BJ (cell line): ENCODE measurements at regions of chr4 and their contacts with region 1.

Region 1: DNA sequence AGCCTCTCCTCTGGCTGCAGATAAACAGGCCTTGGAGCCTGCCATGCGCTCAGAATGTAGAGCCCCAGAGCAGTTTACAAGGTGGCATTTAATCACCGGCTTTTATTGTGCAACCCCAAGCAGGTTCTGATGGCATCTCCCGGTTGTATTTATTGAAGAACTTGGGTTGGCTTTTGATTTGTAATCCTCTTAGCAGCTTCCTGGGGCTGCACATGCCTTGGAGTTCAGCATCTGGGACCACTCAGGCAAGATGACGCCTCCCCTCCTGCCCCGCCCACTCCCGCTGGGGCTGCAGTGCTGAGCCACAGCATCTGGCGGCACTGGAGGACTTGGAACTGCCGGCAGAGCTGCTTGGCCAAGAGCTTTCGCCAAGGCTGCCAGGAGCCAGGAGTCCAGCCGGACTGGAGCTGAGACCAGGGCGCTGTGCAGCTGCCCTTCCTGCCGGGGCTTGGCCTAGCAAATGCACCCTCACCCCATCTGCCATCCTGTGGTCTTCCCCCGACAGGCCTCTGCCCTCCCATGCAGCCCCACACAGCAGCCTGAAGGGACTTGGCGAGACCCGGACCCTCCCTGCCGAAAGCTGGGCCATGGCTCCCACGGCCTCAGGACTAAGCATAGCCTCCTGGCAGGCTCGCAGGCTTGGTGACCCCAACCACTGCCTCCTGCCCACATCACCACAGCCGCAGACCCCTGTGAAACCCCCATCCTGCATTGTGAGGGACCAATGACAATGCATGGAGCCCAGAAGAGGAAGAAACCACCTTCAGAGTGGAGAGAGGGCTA is 5.4 kb downstream of the HTRA3 start:
- DNase-seq: peak; percentile 77
- H3K4me3 ChIP-seq: no peak overlapping the region
- H3K27me3 ChIP-seq: peaks cover 4% of the 10 kb centered on the region; the same call in 1 of the 2 replicates
- CTCF ChIP-seq: peak; percentile 76

Region 2: GRCh38 chr4:7423801-7424552 is 851.0 kb before region 1 on chr4:
- CTCF ChIA-PET with region 1: no interaction called
- POLR2A ChIA-PET with region 1: no interaction called
- DNase-seq: no peak
- H3K4me3 ChIP-seq: no peak overlapping the region
- H3K27me3 ChIP-seq: 0 out of 2 replicates have a peak, but pooled peaks cover 2% of the 10 kb centered on the region
- CTCF ChIP-seq: no peak

Region 3: GRCh38 chr4:8260656-8261111 is 14.3 kb before region 1 on chr4:
- CTCF ChIA-PET with region 1: interaction called, 11 read pairs
- POLR2A ChIA-PET with region 1: no interaction called
- DNase-seq: peak; percentile 90
- H3K4me3 ChIP-seq: no peak overlapping the region
- H3K27me3 ChIP-seq: no peaks in the 10 kb centered on the region; the same call in 1 of the 2 replicates
- CTCF ChIP-seq: peak; percentile 35

Region 4: GRCh38 chr4:8308856-8309771 is 34.2 kb after region 1 on chr4:
- CTCF ChIA-PET with region 1: no interaction called
- POLR2A ChIA-PET with region 1: no interaction called
- DNase-seq: no peak
- H3K4me3 ChIP-seq: no peak overlapping the region
- H3K27me3 ChIP-seq: 0 out of 2 replicates have a peak, but pooled peaks cover 2% of the 10 kb centered on the region
- CTCF ChIP-seq: no peak; the same call in 1 of the 2 replicates

Region 5: DNA sequence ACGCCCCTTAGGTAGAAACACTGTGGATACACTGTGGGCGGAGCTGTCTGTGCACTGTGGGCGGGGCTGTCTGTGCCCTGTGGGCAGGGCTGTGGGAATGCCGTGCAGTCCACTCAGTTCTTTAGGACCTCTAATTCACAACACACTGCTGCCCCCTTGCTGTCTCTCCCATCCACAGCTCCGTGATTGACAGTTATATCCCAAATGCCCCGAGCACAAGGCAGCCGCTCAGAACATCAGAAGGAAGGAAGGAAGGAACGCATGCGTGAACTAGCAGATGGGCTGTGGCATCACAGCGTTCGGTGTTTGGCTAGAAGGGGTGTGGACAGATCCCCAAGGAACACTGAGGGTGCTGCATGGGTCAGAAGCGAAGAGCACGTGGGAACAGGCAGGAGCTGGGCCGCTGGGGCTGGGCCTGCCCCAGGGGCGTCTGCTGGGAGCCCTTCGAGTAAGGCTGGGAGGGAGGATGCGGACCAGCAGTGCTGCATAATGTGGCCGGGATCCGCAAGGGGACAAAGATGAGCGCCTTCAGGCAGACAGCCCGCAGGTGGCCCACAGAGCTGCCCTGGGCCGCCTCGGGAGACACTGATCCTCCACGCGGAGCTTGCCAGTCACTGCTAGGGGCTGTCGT is 135.8 kb after region 1 on chr4:
- CTCF ChIA-PET with region 1: interaction called, 11 read pairs
- POLR2A ChIA-PET with region 1: no interaction called
- DNase-seq: no peak
- H3K4me3 ChIP-seq: no peak overlapping the region
- H3K27me3 ChIP-seq: no peaks in the 10 kb centered on the region
- CTCF ChIP-seq: peak; percentile 24; the same call in 1 of the 2 replicates